Left cardiac atrium (tissue), 4 donors: ENCODE measurements at regions of chr2 and their contacts with region 1.

Region 1: DNA sequence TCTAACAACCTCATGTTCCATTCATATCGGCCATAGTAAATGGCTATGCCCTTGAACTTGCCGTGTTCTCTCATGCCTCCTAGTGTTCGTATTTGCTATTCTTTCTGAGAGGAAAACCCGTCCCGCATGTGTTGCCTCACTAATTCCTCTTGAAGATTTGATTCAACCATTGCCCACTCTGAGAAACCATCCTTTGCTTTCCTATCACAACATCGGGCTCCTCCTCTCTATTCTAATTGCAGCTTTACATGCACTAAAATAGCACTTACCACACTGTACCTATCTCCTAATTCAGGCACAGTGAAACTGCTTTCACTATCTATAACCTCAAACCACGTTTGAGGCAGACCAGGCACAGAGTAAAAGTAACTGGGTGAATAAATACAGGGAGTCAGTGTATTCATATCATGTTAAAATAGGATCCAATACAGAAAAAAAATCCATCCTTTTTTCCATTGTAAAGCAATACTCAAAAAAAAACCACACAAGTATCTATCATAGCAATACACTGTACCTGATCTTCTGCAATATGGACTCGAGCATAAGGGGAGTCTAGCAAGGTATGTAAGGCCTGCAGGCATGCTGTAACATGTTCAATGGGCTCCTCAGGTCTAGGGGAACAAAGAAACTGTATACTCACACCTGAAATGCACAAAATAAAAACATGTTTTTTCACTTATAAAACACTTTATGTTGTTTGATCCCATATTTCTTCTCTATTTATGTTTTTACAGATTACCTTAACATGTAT is 39.0 kb upstream of the STRN start:
- DNase-seq: no peak
- ATAC-seq: peak; percentile 76 to 86

Region 2: GRCh38 chr2:36770542-36771287 is 234.6 kb before region 1 on chr2:
- intact Hi-C with region 1: loop called in 1 of 2 experiments (anchors 10 kb)
- DNase-seq: no peak
- ATAC-seq: peak in 1 of 2 donors; percentile 15

Region 3: DNA sequence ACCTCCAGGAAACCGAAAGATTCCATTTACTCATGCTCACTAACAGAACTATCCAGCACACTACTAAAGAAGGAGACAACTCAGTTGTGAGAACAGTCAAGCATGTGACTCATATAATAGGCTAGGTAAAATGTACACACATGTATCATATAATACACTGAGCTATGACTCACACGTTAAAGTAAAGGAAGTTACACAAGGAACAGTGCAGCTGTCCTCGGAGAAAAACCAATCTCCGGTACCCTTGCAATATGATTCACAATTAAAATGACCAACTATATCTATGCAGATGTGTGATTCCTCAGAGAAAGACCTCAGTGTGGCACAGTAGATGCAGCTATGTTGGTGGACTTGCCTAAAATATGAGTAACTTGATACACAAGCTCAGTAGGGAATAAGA is 115.5 kb before region 1 on chr2:
- intact Hi-C with region 1: loop called in 1 of 2 experiments (anchors 10 kb)
- DNase-seq: no peak
- ATAC-seq: peak in 1 of 2 donors; percentile 41

Region 4: DNA sequence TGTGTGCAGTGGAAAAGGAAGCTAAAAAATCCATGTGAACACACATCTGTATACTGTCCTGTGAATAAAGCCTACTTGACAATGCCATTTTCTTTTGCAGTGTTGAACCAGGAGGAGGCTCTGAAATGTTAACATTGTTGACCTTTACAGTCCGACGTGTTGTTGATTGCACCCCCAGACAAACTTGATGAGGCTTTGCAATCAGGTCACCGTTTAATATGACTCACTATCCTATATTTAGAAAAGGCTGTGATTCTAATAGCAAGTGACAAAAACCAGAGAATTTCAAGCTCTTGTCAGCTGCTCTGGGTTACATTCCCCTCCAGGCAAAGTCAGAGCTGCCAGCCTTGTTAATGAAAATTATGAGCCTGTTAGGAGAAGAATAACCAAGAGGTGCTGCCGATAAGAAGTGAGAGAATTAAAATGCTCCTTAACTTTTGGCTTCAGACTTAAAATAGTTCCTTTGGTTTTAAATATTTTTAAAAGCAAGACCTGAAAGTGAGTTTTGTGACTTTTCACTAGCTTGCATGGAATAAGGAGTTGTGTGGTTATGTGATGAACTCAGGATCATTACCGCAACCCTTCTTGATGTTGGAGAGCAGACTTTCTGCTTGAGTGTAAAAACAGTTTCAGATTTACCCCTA is 501.2 kb after region 1 on chr2:
- intact Hi-C with region 1: no loop called
- DNase-seq: no peak
- ATAC-seq: peak; percentile 89 to 92